Natural killer cell (primary cell): ENCODE measurements at regions of chr2 and their contacts with region 1.

Region 1: GRCh38 chr2:182980115-182980514 is 58.1 kb downstream of the NCKAP1 start:
- DNase-seq: peak in 1 of 2 donors; percentile 36
- ATAC-seq: peak in 1 of 3 donors; percentile 59
- H3K4me3 ChIP-seq: no peak overlapping the region
- H3K4me3 Mint-ChIP-seq: no peak overlapping the region
- H3K27ac ChIP-seq: no peak overlapping the region
- H3K27ac Mint-ChIP-seq: no peak overlapping the region
- H3K4me1 ChIP-seq: no peaks in the 10 kb centered on the region
- H3K4me1 Mint-ChIP-seq: no peaks in the 10 kb centered on the region
- H3K27me3 ChIP-seq: no peaks in the 10 kb centered on the region
- H3K27me3 Mint-ChIP-seq: no peaks in the 10 kb centered on the region
- CTCF ChIP-seq: peak; percentile 80

Region 2: DNA sequence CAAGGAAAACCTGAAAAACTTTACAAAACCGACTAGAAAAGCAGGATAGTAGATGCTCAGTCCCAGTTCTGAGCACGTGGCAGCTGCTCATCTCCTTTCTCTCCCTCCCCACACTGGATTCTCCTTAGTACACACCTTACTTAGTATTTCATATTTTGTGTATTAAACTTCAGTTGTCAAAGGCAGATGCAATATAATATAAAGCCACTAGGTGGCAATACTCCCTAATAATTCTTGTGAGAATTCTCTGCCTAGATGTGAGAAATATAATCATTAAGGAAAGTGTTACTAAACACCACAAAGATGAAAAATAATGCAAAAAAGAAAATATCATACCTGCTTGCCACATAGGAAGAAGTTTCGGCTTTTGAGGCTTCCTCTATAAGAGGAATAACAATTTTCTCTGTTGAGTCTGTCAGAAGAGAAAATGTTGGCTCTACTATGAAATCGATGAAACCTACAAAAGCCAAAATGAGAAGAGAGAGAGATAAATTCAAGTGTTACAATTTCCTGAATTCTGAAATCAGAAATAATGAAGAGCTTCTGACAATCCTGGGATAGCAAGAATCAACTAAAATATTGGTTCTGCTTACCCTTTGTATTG is 793.9 kb before region 1 on chr2:
- intact Hi-C with region 1: loop called (anchors 2 kb)
- DNase-seq: peak in 1 of 2 donors; percentile 47
- ATAC-seq: peak in 1 of 3 donors; percentile 39
- H3K4me3 ChIP-seq: no peak overlapping the region
- H3K4me3 Mint-ChIP-seq: no peak overlapping the region
- H3K27ac ChIP-seq: no peak overlapping the region
- H3K27ac Mint-ChIP-seq: no peak overlapping the region
- H3K4me1 ChIP-seq: no peaks in the 10 kb centered on the region
- H3K4me1 Mint-ChIP-seq: no peaks in the 10 kb centered on the region
- H3K27me3 ChIP-seq: no peaks in the 10 kb centered on the region
- H3K27me3 Mint-ChIP-seq: peaks cover 0 to 5% of the 10 kb centered on the region in 2 donors
- CTCF ChIP-seq: peak; percentile 79

Region 3: GRCh38 chr2:182616471-182617393 is 363.4 kb before region 1 on chr2:
- intact Hi-C with region 1: no loop called
- DNase-seq: no peak
- ATAC-seq: no peak
- H3K4me3 ChIP-seq: no peak overlapping the region
- H3K4me3 Mint-ChIP-seq: no peak overlapping the region
- H3K27ac ChIP-seq: no peak overlapping the region
- H3K27ac Mint-ChIP-seq: no peak overlapping the region
- H3K4me1 ChIP-seq: no peaks in the 10 kb centered on the region
- H3K4me1 Mint-ChIP-seq: no peaks in the 10 kb centered on the region
- H3K27me3 ChIP-seq: no peaks in the 10 kb centered on the region
- H3K27me3 Mint-ChIP-seq: no peaks in the 10 kb centered on the region
- CTCF ChIP-seq: no peak

Region 4: GRCh38 chr2:182666674-182667314 is 313.3 kb before region 1 on chr2:
- intact Hi-C with region 1: loop called (anchors 1 kb)
- DNase-seq: peak in 1 of 2 donors; percentile 64
- ATAC-seq: peak in 2 of 3 donors; percentile 53 to 62
- H3K4me3 ChIP-seq: no peak overlapping the region
- H3K4me3 Mint-ChIP-seq: no peak overlapping the region
- H3K27ac ChIP-seq: no peak overlapping the region
- H3K27ac Mint-ChIP-seq: no peak overlapping the region
- H3K4me1 ChIP-seq: no peaks in the 10 kb centered on the region
- H3K4me1 Mint-ChIP-seq: no peaks in the 10 kb centered on the region
- H3K27me3 ChIP-seq: no peaks in the 10 kb centered on the region
- H3K27me3 Mint-ChIP-seq: peaks cover 5 to 12% of the 10 kb centered on the region in 2 donors
- CTCF ChIP-seq: peak; percentile 43